ENCODE measurements at regions of chrX and their contacts with region 1.

Region 1: GRCh38 chrX:79081895-79082512 is 62.5 kb upstream of the GPR174 start:
- DNase-seq: no peak
- H3K4me3 ChIP-seq: no peak overlapping the region
- H3K27ac ChIP-seq: no peak overlapping the region
- H3K4me1 ChIP-seq: no peaks in the 10 kb centered on the region
- H3K27me3 ChIP-seq: no peaks in the 10 kb centered on the region
- CTCF ChIP-seq: peak; percentile 45 to 64 (median 51)
- EP300 ChIP-seq: no peak
- POLR2A ChIP-seq: no peak

Region 2: DNA sequence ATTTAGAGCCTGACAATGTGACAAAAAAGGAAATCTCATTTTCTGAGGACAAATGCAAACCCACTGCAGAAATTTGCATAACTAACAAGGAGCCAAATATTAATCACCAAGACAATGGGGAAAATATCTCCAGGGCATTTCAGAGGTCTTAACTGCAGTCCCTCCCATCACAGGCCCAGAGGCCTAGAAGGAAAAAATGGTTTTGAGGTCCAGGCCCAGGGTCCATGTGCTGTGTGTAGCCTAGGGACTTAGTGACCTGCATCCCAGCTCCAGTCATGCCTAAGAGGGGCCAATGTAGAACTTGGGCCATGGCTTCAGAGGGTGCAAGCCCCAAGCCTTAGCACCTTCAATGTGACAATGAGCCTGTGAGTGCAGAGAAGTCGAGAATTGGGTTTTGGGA is 92.7 kb before region 1 on chrX:
- in situ Hi-C with region 1: no loop called
- intact Hi-C with region 1: no loop called
- DNase-seq: no peak
- H3K4me3 ChIP-seq: no peak overlapping the region
- H3K27ac ChIP-seq: no peak overlapping the region
- H3K4me1 ChIP-seq: no peaks in the 10 kb centered on the region
- H3K27me3 ChIP-seq: no peaks in the 10 kb centered on the region
- CTCF ChIP-seq: no peak
- EP300 ChIP-seq: no peak
- POLR2A ChIP-seq: no peak

Region 3: DNA sequence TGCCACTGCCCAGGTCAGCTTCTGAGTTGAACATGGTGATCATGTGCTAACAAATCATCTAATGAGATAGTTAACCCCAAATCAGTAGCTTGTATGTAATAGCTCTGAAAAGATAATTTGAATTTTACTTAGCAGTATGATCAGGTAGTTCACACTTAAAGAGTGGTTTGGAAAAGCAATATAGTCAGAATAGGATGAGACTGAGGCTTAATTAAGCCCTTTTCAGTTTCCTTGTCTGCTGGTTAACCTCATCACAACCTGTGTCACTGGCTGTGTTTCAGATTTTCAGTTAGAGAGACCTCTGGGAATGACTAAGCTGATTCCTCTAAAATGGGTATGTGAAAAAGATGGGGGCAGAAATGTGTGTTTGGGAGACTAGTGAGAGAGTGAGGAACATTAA is 100.6 kb after region 1 on chrX:
- in situ Hi-C with region 1: loop called in 1 of 4 experiments (anchors 25 kb)
- intact Hi-C with region 1: no loop called
- DNase-seq: no peak
- H3K4me3 ChIP-seq: no peak overlapping the region
- H3K27ac ChIP-seq: no peak overlapping the region
- H3K4me1 ChIP-seq: no peaks in the 10 kb centered on the region
- H3K27me3 ChIP-seq: no peaks in the 10 kb centered on the region
- CTCF ChIP-seq: no peak
- EP300 ChIP-seq: no peak
- POLR2A ChIP-seq: no peak

Region 4: DNA sequence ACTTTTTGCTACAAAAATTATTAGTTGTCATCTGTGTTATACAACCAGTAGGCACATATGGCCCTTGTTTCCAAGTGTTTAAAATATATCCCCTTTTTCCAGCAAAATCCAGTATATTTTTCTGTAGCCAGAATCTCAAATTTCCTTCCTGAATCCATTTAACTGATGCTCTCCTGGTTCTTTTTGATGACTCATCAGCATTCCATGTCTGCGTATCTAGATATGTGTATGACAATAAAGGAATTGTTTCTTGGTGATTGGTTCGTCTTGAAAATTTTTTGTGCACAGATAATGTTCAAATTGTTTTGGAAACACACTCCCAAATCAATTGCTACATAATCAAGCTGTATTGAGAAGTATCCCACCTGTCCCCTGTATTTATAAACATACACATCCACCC is 186.8 kb after region 1 on chrX:
- in situ Hi-C with region 1: loop called in 1 of 4 experiments (anchors 10 kb)
- intact Hi-C with region 1: no loop called
- DNase-seq: no peak
- H3K4me3 ChIP-seq: no peak overlapping the region
- H3K27ac ChIP-seq: no peak overlapping the region
- H3K4me1 ChIP-seq: no peaks in the 10 kb centered on the region
- H3K27me3 ChIP-seq: no peaks in the 10 kb centered on the region
- CTCF ChIP-seq: no peak
- EP300 ChIP-seq: no peak
- POLR2A ChIP-seq: no peak